ENCODE measurements at regions of chr4 and their contacts with region 1.

Region 1: GRCh38 chr4:56977321-56978012 is at the start of gene NOA1:
- DNase-seq: peak; percentile 98
- H3K4me3 Mint-ChIP-seq: peak within 1 kb of the TSS; percentile 100
- H3K27ac Mint-ChIP-seq: peak within 1 kb of the TSS; percentile 99
- H3K4me1 Mint-ChIP-seq: peaks cover 51% of the 10 kb centered on the region
- H3K27me3 Mint-ChIP-seq: no peaks in the 10 kb centered on the region
- total RNA-seq, gene NOA1: 25.4 to 26.0 TPM

Region 2: GRCh38 chr4:55546756-55547465 is 1430.6 kb before region 1 on chr4 and contains the start of gene CLOCK:
- CTCF ChIA-PET with region 1: no interaction called
- intact Hi-C with region 1: loop called (anchors 5 kb)
- DNase-seq: peak; percentile 83
- H3K4me3 Mint-ChIP-seq: peak within 1 kb of the TSS; percentile 84
- H3K27ac Mint-ChIP-seq: peak within 1 kb of the TSS; percentile 89
- H3K4me1 Mint-ChIP-seq: peaks cover 50% of the 10 kb centered on the region
- H3K27me3 Mint-ChIP-seq: no peaks in the 10 kb centered on the region
- total RNA-seq, gene CLOCK: 8.1 to 8.5 TPM

Region 3: GRCh38 chr4:56387023-56388001 is 590.2 kb before region 1 on chr4 and contains the start of gene AASDH:
- CTCF ChIA-PET with region 1: no interaction called
- intact Hi-C with region 1: loop called (anchors 1 kb)
- DNase-seq: peak; percentile 97
- H3K4me3 Mint-ChIP-seq: peak within 1 kb of the TSS; percentile 87
- H3K27ac Mint-ChIP-seq: peak within 1 kb of the TSS; percentile 95
- H3K4me1 Mint-ChIP-seq: peaks cover 39% of the 10 kb centered on the region
- H3K27me3 Mint-ChIP-seq: no peaks in the 10 kb centered on the region
- total RNA-seq, gene AASDH: 13.5 to 17.0 TPM

Region 4: GRCh38 chr4:56655209-56655626 is 322.2 kb before region 1 on chr4:
- CTCF ChIA-PET with region 1: no interaction called
- intact Hi-C with region 1: loop called (anchors 5 kb)
- DNase-seq: peak; percentile 21
- H3K4me3 Mint-ChIP-seq: peak overlapping the region; percentile 81
- H3K27ac Mint-ChIP-seq: peak overlapping the region; percentile 62
- H3K4me1 Mint-ChIP-seq: peaks cover 51% of the 10 kb centered on the region
- H3K27me3 Mint-ChIP-seq: peaks cover 42% of the 10 kb centered on the region

Region 5: DNA sequence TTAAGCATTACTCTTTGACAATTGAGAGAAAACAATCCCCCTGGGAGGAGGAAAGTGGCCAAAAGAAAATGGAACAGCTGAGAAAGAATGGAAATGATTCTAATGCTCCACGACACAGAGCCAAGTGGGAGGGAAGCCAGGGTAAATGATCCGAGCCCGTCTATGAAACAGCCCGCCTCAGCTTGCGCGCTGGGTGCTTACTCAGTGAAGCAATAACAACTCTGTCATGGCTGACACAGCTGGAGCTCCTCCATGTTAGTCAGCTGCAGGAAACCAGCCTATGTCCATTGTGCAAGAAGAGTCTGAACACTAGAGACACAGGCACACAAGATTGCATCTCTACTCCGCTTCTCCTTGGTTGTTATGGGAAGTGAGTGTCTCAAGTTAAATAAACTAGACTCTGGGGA is 19.4 kb before region 1 on chr4:
- CTCF ChIA-PET with region 1: interaction called, 5 read pairs
- intact Hi-C with region 1: loop called (anchors 2 kb)
- DNase-seq: no peak
- H3K4me3 Mint-ChIP-seq: no peak overlapping the region
- H3K27ac Mint-ChIP-seq: no peak overlapping the region
- H3K4me1 Mint-ChIP-seq: peaks cover 1% of the 10 kb centered on the region
- H3K27me3 Mint-ChIP-seq: no peaks in the 10 kb centered on the region